AG04450 (cell line): ENCODE measurements at regions of chr11 and their contacts with region 1.

Region 1: DNA sequence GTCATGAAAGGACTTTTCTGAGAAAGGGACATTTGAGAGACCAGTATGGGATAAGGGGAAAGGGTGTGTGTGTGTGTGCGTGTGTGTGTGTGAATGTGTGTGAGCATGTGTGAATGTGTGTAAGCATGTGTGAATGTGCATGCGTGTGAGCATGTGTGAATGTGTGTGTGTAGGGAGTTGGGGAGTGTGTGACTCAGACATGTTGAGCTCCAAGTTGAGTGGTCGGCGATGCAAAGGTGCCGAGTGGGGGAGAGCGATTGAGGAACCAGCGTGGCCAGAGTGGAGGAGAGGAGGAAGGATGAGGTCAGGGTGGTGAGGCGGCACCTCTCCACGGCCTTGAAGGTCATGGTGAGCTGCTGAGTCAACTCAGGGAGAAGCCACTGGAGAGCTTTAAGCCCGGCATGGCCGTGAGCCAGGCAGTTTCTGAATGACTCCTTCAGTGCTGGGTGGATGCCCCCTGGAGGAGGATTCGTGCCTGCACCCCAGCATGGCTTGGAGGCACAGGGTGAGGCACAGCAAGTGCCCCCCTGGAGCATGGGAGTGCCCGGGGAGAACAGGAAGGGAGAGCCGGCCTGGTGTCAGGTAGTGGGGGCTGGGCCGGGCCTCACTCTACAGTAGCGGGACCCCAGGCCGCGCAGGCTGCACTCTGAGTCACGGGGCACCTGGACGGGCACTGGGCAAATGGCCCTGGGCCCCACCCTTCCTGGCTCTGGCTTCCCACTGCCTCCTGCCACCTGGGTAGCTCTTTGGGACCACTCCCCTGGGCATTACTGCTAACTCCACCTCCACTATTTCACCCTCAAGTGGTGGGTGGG is 8.2 kb upstream of the CCDC88B start:
- DNase-seq: peak; percentile 38
- H3K4me3 ChIP-seq: no peak overlapping the region
- H3K27ac ChIP-seq: no peak overlapping the region
- H3K27me3 ChIP-seq: peaks cover 3% of the 10 kb centered on the region
- CTCF ChIP-seq: peak; percentile 63

Region 2: DNA sequence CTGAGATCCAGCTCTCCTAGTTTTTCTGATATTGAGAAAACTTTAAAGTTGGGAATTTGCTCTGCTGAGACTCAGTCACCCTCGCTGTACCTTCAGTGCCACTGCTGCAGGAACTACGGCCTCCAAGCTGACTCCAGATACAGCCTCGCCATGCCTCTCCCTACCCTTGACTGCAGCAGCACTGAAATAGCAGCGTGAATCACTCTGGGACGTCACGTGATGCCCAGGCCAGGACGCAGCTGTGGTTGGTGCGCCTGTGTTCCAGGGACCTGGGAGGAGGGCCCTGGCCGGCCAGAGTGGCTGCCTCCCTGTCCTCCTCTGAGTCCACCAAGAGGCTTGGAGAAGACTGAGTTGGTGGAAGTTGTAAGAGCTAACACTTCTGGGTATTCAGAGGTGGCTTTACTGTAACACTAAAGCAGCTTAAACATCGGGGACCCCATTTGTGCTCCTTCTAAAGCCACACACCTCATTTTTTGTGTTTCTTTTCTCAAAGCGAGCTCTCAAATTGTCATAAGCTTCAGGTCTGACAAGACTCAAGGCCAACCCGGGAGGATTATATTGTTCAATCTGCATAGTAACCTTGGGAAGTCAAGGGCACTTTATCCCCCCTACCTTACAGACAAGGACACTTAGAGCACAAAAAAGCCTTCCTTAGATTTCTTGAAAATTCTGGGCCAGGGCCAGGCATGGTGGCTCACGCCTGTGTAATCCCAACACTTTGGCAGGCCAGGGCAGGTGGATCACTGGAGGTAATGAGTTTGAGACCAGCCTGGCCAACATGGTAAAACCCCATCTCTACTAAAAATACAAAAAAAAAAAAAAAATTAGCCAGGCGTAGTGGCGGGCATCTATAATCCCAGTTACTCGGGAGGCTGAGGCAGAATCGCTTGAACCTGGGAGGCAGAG is 150.0 kb before region 1 on chr11:
- CTCF ChIA-PET with region 1: no interaction called
- POLR2A ChIA-PET with region 1: no interaction called
- DNase-seq: peak; percentile 71
- H3K4me3 ChIP-seq: peak overlapping the region; percentile 40
- H3K27ac ChIP-seq: peak overlapping the region; percentile 40
- H3K27me3 ChIP-seq: no peaks in the 10 kb centered on the region
- CTCF ChIP-seq: no peak

Region 3: GRCh38 chr11:64317957-64318693 is 13.6 kb before region 1 on chr11 and contains the start of gene PRDX5:
- CTCF ChIA-PET with region 1: interaction called, 23 read pairs
- POLR2A ChIA-PET with region 1: interaction called, 9 read pairs
- DNase-seq: peak; percentile 85
- H3K4me3 ChIP-seq: peak within 1 kb of the TSS; percentile 90
- H3K27ac ChIP-seq: peak within 1 kb of the TSS; percentile 96
- H3K27me3 ChIP-seq: no peaks in the 10 kb centered on the region
- CTCF ChIP-seq: peak; percentile 12; the same call in 1 of the 2 replicates
- polyA plus RNA-seq, gene PRDX5: 366 and 383 TPM in 2 replicates

Region 4: GRCh38 chr11:64341851-64342791 is 10.4 kb after region 1 on chr11:
- CTCF ChIA-PET with region 1: interaction called, 19 read pairs
- POLR2A ChIA-PET with region 1: interaction called, 12 read pairs
- DNase-seq: peak; percentile 42
- H3K4me3 ChIP-seq: peak overlapping the region; percentile 51
- H3K27ac ChIP-seq: peak overlapping the region; percentile 57
- H3K27me3 ChIP-seq: no peaks in the 10 kb centered on the region
- CTCF ChIP-seq: peak; percentile 32

Region 5: DNA sequence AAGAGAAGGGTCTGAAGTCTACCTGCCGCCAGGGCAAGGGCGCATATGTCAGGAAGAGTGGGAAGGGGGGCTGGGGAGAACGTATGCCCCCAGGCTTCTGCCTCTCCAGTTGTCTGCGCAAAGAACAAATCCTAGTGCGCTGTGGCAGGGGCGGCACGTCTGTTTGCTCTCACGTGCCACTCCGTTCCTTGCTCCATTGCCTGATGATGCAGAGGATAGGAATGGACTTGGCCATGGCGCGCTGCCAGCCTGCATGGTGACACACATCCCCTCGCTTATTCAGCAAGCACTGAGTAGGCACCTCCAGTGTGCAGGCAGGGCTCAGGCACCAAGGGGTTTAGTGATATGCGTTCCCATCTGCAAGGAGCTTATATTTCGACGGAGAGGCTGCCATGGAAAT is 213.8 kb after region 1 on chr11:
- CTCF ChIA-PET with region 1: no interaction called
- POLR2A ChIA-PET with region 1: no interaction called
- DNase-seq: peak; percentile 21
- H3K4me3 ChIP-seq: no peak overlapping the region
- H3K27ac ChIP-seq: no peak overlapping the region
- H3K27me3 ChIP-seq: peaks cover 20% of the 10 kb centered on the region
- CTCF ChIP-seq: no peak